ENCODE measurements at regions of chr4 and their contacts with region 1.

Region 1: GRCh38 chr4:6269616-6270511 is at the start of gene WFS1:
- DNase-seq: peak; percentile 99
- H3K4me3 Mint-ChIP-seq: peak within 1 kb of the TSS; percentile 82
- H3K27ac Mint-ChIP-seq: no peak within 1 kb of the TSS
- H3K4me1 Mint-ChIP-seq: peaks cover 14% of the 10 kb centered on the region
- H3K27me3 Mint-ChIP-seq: peaks cover 32% of the 10 kb centered on the region
- total RNA-seq, gene WFS1: 4.7 and 5.9 TPM in 2 replicates

Region 2: GRCh38 chr4:6198768-6199421 is 71.0 kb before region 1 on chr4:
- intact Hi-C with region 1: loop called (anchors 5 kb)
- DNase-seq: peak; percentile 73
- H3K4me3 Mint-ChIP-seq: peak overlapping the region; percentile 85
- H3K27ac Mint-ChIP-seq: peak overlapping the region; percentile 75
- H3K4me1 Mint-ChIP-seq: peaks cover 29% of the 10 kb centered on the region
- H3K27me3 Mint-ChIP-seq: peaks cover 25% of the 10 kb centered on the region